Esophagus muscularis mucosa (tissue), 4 donors: ENCODE measurements at regions of chr20 and their contacts with region 1.

Region 1: GRCh38 chr20:34069341-34070078 is 42.5 kb downstream of the EIF2S2 start:
- DNase-seq: peak; percentile 94
- H3K4me3 ChIP-seq: no peak overlapping the region
- H3K27ac ChIP-seq: peak overlapping the region in 1 of 4 donors; percentile 24
- H3K4me1 ChIP-seq: peaks cover 27 to 47% (median 42%) of the 10 kb centered on the region in 4 donors
- H3K27me3 ChIP-seq: no peaks in the 10 kb centered on the region
- CTCF ChIP-seq: peak; percentile 85 to 90 (median 88)
- EP300 ChIP-seq: no peak
- POLR2A ChIP-seq: no peak

Region 2: DNA sequence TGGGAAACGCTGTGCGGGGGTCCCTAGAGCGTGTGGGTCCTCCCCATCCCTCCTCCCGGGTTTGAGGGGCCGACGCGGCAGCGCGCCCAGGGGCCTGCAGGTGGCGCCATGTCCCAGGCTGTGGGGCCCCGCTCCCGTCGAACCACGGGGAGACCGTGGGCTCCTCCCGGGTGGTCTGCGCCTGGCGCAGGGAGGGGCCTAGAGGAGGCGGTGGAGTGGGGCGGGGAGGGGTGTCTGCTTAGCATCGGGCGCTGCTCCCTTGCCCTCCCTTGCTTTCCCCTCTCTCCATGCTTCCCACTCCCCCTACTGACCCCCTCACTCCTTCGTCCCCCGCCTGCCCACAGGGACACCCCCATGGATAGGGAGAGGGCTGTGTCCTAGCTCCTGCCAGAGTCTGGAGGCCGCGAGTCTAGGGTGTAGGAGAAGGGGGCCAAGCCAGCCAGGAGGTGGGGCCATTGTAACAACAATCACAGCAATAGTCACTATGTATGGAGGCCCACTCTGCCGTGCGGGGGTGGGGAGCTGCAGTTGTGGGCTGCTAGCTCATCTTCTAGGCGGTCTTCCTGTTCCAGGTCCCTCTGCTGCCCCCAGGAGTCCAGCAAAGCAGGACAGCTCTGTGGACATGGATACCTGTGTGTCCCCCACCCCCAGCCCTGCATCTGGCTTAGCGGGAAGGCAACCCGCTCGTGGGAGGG is 206.7 kb before region 1 on chr20:
- intact Hi-C with region 1: loop called (anchors 2 kb)
- DNase-seq: no peak
- H3K4me3 ChIP-seq: peak overlapping the region; percentile 6 to 31 (median 22)
- H3K27ac ChIP-seq: no peak overlapping the region
- H3K4me1 ChIP-seq: peaks cover 14 to 25% (median 24%) of the 10 kb centered on the region in 4 donors
- H3K27me3 ChIP-seq: no peaks in the 10 kb centered on the region
- CTCF ChIP-seq: peak; percentile 63 to 80 (median 70)
- EP300 ChIP-seq: no peak
- POLR2A ChIP-seq: no peak

Region 3: GRCh38 chr20:33915726-33916331 is 153.7 kb before region 1 on chr20:
- intact Hi-C with region 1: loop called (anchors 5 kb)
- DNase-seq: no peak
- H3K4me3 ChIP-seq: no peak overlapping the region
- H3K27ac ChIP-seq: no peak overlapping the region
- H3K4me1 ChIP-seq: no peaks in the 10 kb centered on the region
- H3K27me3 ChIP-seq: no peaks in the 10 kb centered on the region
- CTCF ChIP-seq: peak; percentile 49 to 61 (median 52)
- EP300 ChIP-seq: no peak
- POLR2A ChIP-seq: no peak

Region 4: DNA sequence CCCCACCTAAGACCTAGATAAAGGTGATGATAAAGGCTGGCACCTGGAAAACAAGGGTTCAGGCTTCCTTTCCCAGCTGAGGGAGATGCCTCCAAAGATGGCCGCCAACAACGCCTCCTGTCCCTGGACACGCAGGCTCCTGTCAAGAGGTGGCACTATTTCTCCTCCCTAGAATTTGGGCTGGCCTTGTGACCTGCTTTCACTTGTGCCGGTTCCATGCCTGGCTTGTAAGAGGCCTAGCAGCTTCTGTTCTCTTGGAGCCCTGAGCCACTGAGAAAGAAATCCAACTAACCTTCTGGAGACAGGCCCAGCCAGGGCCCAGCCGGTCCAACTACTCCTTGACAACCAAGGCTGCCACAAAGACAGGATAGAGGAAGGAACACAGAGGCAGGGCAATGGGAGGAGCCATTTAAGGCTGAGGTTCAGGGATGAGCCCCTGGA is 136.0 kb before region 1 on chr20:
- intact Hi-C with region 1: loop called (anchors 2 kb)
- DNase-seq: no peak
- H3K4me3 ChIP-seq: no peak overlapping the region
- H3K27ac ChIP-seq: peak overlapping the region; percentile 36 to 59 (median 46)
- H3K4me1 ChIP-seq: peaks cover 0 to 7% (median 3%) of the 10 kb centered on the region in 4 donors
- H3K27me3 ChIP-seq: no peaks in the 10 kb centered on the region
- CTCF ChIP-seq: peak; percentile 47 to 72 (median 64)
- EP300 ChIP-seq: no peak
- POLR2A ChIP-seq: no peak

Region 5: DNA sequence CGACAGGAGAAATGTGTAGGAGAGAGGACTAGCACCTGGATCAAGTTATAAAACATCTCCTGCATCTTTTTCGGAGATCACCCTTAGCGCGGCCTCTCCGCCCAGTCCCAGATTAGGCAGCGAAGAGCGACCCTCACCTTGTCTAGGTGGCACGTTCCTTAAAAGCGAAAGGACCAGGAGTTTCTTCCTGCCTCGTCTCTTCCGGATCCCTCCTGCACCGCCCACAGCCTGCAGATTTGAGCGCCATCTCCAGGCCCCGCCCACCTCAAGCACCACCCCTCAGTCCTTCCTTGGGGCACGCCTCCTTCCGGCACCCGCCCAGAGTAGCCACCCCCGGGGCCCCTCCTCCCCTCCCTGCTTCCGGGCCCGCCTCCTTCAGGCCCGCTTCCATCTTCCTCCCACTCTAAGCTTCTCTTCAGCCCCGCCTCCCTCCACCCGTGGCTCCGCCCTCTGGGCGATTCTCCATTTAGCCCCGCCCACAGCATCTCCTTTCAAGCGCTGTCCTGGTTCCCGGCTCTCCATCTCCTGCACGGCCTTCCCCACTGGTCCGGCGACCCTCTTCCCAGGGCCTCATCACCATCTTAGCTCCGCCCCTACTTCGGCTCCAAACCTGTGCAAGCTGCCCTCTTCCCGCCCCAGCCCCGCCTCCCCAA is 76.5 kb before region 1 on chr20:
- intact Hi-C with region 1: loop called (anchors 5 kb)
- DNase-seq: peak; percentile 100
- H3K4me3 ChIP-seq: peak overlapping the region; percentile 89 to 96 (median 94)
- H3K27ac ChIP-seq: peak overlapping the region; percentile 98 to 99 (median 99)
- H3K4me1 ChIP-seq: peaks cover 39 to 51% (median 47%) of the 10 kb centered on the region in 4 donors
- H3K27me3 ChIP-seq: no peaks in the 10 kb centered on the region
- CTCF ChIP-seq: no peak
- EP300 ChIP-seq: no peak
- POLR2A ChIP-seq: no peak